ENCODE measurements at regions of chr1 and their contacts with region 1.

Region 1: DNA sequence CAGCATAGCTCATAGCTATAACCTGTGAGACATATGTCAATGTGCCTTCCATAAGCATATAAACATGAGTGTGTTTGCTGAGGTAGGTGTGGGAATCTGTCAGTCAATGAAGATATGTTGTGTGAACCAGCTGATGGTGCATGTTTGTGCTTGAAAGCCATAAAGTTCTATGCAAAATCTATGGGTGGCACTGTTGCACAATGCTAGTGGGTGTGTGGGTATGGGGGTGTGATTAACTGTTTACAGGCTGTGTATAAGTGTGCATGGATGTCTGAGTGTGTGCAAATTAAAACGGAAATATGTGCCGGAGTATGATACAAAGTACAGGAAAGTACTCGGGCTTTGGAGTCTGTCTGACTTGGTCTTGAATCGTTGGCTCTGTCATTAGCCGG is 1.0 kb upstream of the ATP2B4 start:
- DNase-seq: peak; percentile 89
- H3K4me3 Mint-ChIP-seq: peak overlapping the region; percentile 96
- H3K27ac Mint-ChIP-seq: peak overlapping the region; percentile 97
- H3K4me1 Mint-ChIP-seq: peaks cover 78% of the 10 kb centered on the region
- H3K27me3 Mint-ChIP-seq: no peaks in the 10 kb centered on the region

Region 2: GRCh38 chr1:203326830-203327683 is 298.6 kb before region 1 on chr1:
- intact Hi-C with region 1: loop called (anchors 10 kb)
- DNase-seq: peak; percentile 98
- H3K4me3 Mint-ChIP-seq: peak overlapping the region; percentile 83
- H3K27ac Mint-ChIP-seq: peak overlapping the region; percentile 94
- H3K4me1 Mint-ChIP-seq: peaks cover 61% of the 10 kb centered on the region
- H3K27me3 Mint-ChIP-seq: no peaks in the 10 kb centered on the region

Region 3: GRCh38 chr1:203649999-203650855 is 24.6 kb after region 1 on chr1:
- intact Hi-C with region 1: loop called (anchors 1 kb)
- DNase-seq: peak; percentile 86
- H3K4me3 Mint-ChIP-seq: peak overlapping the region; percentile 77
- H3K27ac Mint-ChIP-seq: peak overlapping the region; percentile 95
- H3K4me1 Mint-ChIP-seq: peaks cover 58% of the 10 kb centered on the region
- H3K27me3 Mint-ChIP-seq: no peaks in the 10 kb centered on the region

Region 4: DNA sequence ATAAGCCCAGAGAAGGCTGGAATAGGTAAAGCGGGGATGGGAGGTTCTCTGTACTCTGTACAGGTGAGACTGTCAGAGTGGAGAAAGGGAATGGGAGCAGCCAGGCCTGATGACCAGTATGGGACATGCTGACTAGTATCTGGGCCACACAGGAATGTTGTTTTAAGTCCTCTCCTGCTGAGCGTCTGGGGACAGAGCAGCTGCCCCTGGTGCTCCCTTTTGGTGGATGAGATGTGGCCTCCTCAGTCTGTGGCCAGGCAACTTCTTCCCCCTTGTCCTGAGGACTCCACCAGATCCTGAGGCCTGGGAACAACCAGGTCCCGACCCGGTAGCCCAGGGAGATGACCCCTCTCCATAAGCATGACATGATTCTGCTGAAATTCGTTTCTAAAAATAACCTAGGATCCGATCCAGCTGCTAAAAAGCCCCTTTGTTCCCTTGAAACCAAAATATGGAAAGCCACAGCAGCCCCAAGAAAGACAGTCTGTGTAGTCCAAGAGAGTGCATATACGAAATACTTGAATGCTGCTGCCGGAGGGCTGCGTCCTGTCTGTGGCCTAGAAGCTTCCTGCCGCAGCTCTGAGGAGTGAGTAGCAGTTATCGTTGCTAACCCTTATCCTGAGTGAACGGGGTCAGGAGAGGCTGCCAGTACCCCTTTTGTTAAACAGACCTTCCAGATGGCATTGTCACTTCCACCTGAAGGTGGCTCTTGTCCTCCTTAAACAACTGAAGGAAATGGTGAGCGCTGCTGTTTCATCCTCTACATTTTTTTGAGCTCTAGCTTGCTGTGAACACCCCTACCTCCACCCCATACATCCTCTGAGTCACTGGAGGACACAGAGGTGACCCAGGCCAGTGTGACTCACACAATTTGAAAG is 48.2 kb after region 1 on chr1:
- intact Hi-C with region 1: loop called (anchors 1 kb)
- DNase-seq: peak; percentile 92
- H3K4me3 Mint-ChIP-seq: peak overlapping the region; percentile 75
- H3K27ac Mint-ChIP-seq: peak overlapping the region; percentile 96
- H3K4me1 Mint-ChIP-seq: peaks cover 53% of the 10 kb centered on the region
- H3K27me3 Mint-ChIP-seq: no peaks in the 10 kb centered on the region

Region 5: GRCh38 chr1:203711251-203712007 is 85.8 kb after region 1 on chr1:
- intact Hi-C with region 1: no loop called
- DNase-seq: no peak
- H3K4me3 Mint-ChIP-seq: no peak overlapping the region
- H3K27ac Mint-ChIP-seq: no peak overlapping the region
- H3K4me1 Mint-ChIP-seq: no peaks in the 10 kb centered on the region
- H3K27me3 Mint-ChIP-seq: no peaks in the 10 kb centered on the region

Region 6: DNA sequence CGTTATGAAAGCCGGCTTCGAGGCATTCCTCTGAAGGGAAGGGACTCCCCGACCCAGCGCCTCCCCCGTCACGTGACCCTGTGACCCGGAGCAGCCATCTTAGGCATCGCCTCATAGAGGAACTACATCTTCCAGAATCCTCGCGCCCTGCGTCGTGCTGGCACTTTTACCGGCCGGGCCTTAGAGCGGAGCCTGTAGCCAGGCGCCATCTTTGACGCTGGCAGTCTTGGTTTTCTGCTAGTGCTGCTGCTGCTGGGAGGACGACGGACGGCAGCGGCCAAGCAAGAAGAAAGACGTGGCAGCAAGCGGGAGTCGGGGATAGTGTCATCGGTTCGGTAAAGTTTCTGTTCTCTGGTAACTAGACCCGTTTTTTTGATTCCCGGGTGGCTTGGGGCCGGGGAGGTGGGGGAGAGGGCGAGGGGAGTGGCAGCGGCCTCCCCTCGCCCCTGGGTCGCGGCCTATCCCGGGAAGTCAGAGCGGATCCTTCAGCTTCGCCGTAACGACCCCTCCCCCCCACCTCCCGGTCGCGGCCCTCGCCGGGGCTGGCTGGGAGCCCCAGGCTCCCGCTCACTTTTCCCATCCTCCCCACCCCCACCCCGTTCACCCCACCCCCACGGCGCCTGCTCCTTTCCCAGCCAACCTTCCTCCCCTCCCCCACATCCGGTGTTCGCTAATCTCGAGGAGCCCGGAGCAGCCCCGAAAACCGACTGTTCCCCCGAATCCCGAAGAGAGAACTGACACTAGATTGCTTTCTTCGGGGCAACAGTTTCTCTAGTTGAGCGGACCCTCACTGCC is 170.0 kb after region 1 on chr1 and contains the starts of genes ZBED6 and ZC3H11A:
- intact Hi-C with region 1: loop called (anchors 10 kb)
- DNase-seq: peak; percentile 100
- H3K4me3 Mint-ChIP-seq: peak within 1 kb of the TSS; percentile 95
- H3K27ac Mint-ChIP-seq: peak within 1 kb of the TSS; percentile 97
- H3K4me1 Mint-ChIP-seq: peaks cover 39% of the 10 kb centered on the region
- H3K27me3 Mint-ChIP-seq: no peaks in the 10 kb centered on the region
- total RNA-seq, gene ZBED6: 19.1 and 21.1 TPM in 2 replicates
- total RNA-seq, gene ZC3H11A: 82.1 and 83.9 TPM in 2 replicates

Measured in activated CD4-positive, alpha-beta T cell treated with anti-CD3 and anti-CD28 coated beads, Interleukin-2, amount 10 ng/mL, durations not matched to agents 24 days and 14 days (primary cell).